Activated T-helper 2 cell treated with anti-CD3 and anti-CD28 coated beads, Interferon-gamma antibody, Interleukin-2, Interleukin-4, amounts not matched to agents 10 μg/mL and 5 μg/mL and 100 μg/mL, durations not matched to agents 14 hours and 24 hours and 36 hours (primary cell): ENCODE measurements at regions of chr2 and their contacts with region 1.

Region 1: DNA sequence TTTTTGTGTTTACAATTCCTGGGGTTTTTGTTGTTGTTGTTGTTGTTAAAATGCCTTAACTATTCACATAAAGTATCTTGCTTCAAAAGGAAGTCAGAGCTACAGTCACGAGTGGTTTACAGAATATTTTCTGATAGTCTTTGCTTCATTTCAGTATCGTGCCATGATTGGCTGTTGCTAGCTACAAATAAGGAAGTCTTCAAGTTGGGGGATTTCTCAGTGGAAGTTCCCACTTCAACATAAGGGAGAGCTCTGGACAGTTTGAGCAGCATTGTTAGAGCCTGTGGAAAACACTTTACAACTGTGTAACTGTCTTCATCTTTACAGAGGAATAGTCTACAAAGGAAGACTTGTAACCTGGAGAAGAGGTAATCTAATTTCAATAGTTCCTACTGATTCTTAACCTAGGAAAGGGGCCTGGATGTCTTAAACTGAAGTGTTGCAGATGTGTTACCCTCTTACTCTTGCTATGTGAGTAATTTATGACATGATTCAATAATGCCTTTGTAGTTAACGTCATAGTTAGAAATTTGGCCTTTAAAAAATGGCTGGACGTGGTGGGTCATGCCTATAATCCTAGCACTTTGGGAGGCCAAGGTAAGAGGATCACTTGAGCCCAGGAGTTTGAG is 23.4 kb upstream of the TANK start:
- DNase-seq: no peak
- H3K4me3 Mint-ChIP-seq: peak overlapping the region; percentile 88
- H3K27ac Mint-ChIP-seq: peak overlapping the region; percentile 96
- H3K4me1 Mint-ChIP-seq: peaks cover 44% of the 10 kb centered on the region
- H3K27me3 Mint-ChIP-seq: no peaks in the 10 kb centered on the region

Region 2: GRCh38 chr2:161104054-161104553 is 32.7 kb before region 1 on chr2:
- intact Hi-C with region 1: loop called (anchors 2 kb)
- DNase-seq: no peak
- H3K4me3 Mint-ChIP-seq: no peak overlapping the region
- H3K27ac Mint-ChIP-seq: no peak overlapping the region
- H3K4me1 Mint-ChIP-seq: peaks cover 31% of the 10 kb centered on the region
- H3K27me3 Mint-ChIP-seq: peaks cover 2% of the 10 kb centered on the region

Region 3: DNA sequence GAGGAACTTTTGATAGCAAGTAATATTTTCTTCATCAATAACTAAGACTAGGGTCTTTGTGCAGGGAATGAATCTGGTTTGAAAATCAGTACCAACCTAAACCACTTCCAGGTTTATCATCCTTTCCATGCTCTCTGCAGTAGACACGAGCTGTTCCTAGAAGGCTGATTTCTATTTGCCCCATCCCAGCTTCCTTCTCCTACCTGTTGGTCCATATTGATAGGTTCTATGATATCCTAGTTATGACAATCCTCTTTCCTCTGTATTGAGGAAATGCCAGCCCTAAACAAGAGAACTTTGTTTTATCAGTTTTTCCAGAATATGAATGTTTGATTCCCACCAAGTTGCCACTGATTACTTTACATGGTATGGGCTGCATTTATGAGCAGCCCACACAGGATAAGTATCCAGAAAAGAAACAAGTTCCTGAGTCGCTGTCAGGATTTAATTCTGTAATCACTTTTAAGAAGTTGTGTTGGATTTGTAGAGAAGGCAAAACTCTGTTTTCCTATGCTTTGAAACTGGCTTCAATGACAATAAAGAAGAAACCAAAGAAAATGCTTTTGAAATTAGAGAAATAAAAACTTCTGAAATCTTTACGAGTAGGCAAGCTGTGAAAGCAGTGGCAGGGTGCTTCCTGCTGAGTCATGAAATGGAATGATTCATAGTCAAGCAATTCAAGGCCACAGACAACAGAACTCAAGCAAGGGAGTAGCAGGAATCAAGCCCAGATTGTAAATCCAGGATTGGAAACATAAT is 13.9 kb before region 1 on chr2:
- intact Hi-C with region 1: loop called (anchors 1 kb)
- DNase-seq: no peak
- H3K4me3 Mint-ChIP-seq: no peak overlapping the region
- H3K27ac Mint-ChIP-seq: peak overlapping the region; percentile 3
- H3K4me1 Mint-ChIP-seq: peaks cover 15% of the 10 kb centered on the region
- H3K27me3 Mint-ChIP-seq: no peaks in the 10 kb centered on the region

Region 4: DNA sequence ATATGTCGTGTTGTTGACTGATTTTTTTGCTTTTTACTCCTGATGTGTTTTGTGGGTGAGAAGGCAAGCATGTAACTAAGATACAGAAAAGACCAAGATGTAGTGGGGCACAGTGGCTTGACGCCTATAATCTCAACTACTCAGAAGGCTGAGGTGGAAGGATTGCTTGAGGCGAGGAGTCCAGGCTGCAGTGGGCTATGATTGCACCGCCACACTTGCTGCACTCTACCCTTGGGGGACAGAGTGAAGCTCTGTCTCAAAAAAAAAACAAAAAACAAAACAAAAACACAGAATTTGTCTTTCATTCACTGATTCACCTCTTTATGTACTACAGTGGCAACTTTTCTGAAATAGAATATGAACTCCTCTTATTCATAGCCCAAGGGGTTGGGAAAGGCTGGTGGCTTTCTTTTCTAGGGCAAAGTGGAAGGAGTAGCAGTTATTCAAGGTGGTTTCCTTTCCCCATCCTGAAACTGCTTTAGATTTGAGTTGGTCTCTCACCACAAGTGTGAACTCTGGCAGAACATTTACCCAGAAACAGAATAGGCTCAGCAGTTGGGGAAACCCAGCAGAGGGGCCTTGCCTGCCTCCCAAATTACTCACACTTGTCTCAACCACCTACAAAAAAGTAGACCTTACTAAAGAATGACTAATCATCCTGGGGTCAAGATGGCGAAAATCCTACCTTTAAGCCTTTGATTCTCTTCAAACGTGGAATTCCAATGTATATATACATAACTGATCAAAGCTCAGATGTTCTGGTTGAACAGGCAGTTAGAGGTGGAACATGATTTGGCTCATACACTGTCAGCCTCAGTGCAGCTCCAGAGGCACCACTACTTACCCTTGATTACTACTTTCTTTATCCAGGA is 30.0 kb after region 1 on chr2:
- intact Hi-C with region 1: loop called (anchors 1 kb)
- DNase-seq: peak; percentile 58
- H3K4me3 Mint-ChIP-seq: peak overlapping the region; percentile 34
- H3K27ac Mint-ChIP-seq: peak overlapping the region; percentile 87
- H3K4me1 Mint-ChIP-seq: peaks cover 84% of the 10 kb centered on the region
- H3K27me3 Mint-ChIP-seq: no peaks in the 10 kb centered on the region

Region 5: DNA sequence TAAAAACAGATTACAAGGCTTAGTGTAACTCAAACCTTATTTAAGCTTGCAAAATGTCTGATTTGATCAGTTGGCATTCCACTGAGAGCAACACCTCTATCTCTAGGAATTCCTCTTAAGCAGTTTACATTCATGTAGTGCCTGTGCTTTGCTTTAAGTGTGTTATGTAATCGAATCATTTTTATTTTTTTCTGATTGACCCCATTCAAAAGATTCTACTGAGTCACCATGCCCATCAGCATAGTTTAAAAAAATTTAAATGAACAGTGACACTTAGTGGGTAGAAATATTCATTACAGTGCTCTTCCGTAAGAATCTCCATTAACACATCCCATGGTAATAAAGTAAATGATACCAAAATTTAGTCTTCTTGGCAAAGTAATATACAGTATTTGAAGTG is 419.6 kb after region 1 on chr2:
- intact Hi-C with region 1: no loop called
- DNase-seq: no peak
- H3K4me3 Mint-ChIP-seq: no peak overlapping the region
- H3K27ac Mint-ChIP-seq: no peak overlapping the region
- H3K4me1 Mint-ChIP-seq: no peaks in the 10 kb centered on the region
- H3K27me3 Mint-ChIP-seq: peaks cover 18% of the 10 kb centered on the region

Region 6: DNA sequence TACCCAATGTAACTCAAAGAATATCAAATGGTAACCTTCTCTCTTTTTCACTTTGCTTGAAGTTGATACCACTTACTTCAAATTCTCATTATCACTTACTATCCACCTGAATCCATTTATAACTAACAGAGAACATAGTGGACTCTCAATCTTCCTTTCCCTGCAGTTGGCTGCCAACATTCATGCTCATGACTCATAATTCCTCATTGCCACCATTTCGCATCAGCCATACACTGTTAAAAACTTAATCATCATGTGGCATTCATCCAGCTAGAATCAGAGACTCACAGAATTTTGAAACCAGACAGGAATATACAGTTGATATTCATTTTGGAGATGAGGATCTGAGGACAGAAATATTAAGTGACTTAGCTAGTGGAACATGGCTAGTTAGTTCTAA is 544.2 kb after region 1 on chr2:
- intact Hi-C with region 1: no loop called
- DNase-seq: no peak
- H3K4me3 Mint-ChIP-seq: no peak overlapping the region
- H3K27ac Mint-ChIP-seq: no peak overlapping the region
- H3K4me1 Mint-ChIP-seq: no peaks in the 10 kb centered on the region
- H3K27me3 Mint-ChIP-seq: peaks cover 9% of the 10 kb centered on the region